ENCODE measurements at regions of chr2 and their contacts with region 1.

Region 1: GRCh38 chr2:233443468-233444183 is 89.3 kb downstream of the DGKD start:
- DNase-seq: peak; percentile 88
- H3K27ac ChIP-seq: 0 out of 2 replicates have a peak overlapping the region, but pooled peaks have one; percentile 10
- CTCF ChIP-seq: peak; percentile 85

Region 2: DNA sequence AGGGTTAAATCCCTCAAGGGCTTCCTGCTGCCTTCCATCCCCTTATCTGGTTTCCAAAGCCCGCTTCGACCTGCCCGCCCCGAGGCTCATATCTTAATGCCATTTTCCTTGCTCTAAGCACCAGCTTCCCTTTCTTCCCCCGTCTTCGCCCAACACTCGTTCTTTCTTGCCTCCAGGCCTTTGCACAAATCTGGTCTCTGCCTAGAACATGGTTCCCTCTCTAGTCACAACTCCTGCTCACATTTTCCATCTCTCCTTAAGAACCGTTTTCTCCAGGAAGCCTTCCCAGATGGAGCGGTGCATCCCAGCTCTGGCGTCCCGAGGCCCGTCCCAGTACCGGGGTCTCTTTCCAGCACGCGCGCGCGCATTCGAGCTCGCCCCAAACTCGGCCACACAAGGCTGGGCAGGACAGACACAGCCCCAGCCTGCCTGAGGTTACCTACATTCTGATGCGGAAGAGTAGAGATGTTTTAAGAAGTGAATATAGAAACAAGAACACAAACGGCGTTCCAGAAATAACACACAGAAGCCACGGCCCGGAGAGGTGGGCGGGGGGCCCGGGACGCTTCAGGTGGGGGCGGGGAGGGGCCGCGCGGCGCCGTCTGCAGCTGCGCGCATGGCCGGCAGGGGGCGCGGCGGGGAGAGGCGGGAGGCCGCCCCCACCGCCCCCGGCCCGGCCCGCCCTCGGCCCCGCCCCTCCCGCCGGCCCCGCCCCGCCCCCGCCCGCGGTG is 89.7 kb before region 1 on chr2 and contains the start of gene DGKD:
- CTCF ChIA-PET with region 1: interaction called, 13 read pairs
- POLR2A ChIA-PET with region 1: no interaction called
- DNase-seq: peak; percentile 78
- H3K27ac ChIP-seq: peak within 1 kb of the TSS; percentile 77
- CTCF ChIP-seq: peak; percentile 74

Region 3: DNA sequence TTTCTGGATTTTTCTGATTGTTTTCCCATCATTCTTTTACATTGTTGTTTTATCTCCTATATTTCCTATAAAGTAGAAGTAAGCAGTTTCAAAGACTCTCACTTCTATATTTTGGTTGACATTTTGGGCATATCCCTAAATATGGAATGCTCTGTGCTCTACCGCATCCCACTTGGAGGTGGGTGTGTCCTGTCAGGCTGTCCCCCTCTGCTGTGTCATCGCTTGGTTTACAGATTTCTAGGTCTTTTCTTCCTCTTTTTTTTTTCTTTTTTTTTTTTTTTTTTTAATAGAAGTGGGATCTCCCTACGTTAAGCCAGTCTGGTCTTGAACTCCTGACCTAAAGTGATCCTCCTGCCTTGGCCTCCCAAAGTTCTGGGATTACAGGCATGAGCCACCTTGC is 76.0 kb before region 1 on chr2:
- CTCF ChIA-PET with region 1: no interaction called
- POLR2A ChIA-PET with region 1: no interaction called
- DNase-seq: no peak
- H3K27ac ChIP-seq: no peak overlapping the region
- CTCF ChIP-seq: no peak

Region 4: DNA sequence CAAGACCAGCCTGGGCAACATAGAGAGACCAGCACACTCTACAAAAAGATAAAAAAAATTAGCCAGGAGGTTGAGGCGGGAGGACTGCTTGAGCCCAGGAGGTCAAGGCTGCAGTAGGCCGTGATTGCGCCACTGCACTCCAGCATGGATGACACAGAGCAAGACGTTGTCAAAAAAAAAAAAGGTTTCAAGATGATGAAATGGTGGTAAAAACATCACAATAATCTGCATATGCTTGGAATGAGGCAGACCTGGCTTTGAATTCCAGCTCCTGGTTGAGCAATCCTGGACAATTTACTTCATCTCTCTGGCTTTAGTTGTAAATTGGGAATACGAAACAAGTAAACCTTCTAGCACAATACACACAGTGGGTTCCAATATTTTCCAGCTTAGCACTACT is 98.9 kb after region 1 on chr2:
- CTCF ChIA-PET with region 1: no interaction called
- POLR2A ChIA-PET with region 1: no interaction called
- DNase-seq: no peak
- H3K27ac ChIP-seq: peak overlapping the region; percentile 39; the same call in 1 of the 2 replicates
- CTCF ChIP-seq: no peak

Region 5: GRCh38 chr2:234081970-234082822 is 638.6 kb after region 1 on chr2:
- CTCF ChIA-PET with region 1: no interaction called
- POLR2A ChIA-PET with region 1: no interaction called
- DNase-seq: no peak
- H3K27ac ChIP-seq: no peak overlapping the region
- CTCF ChIP-seq: no peak